Left colon (tissue), 2 donors: ENCODE measurements at regions of chr9 and their contacts with region 1.

Region 1: GRCh38 chr9:108272349-108272899 is 583.4 kb downstream of the ACTL7B start:
- DNase-seq: peak; percentile 56 to 69
- ATAC-seq: peak; percentile 75

Region 2: DNA sequence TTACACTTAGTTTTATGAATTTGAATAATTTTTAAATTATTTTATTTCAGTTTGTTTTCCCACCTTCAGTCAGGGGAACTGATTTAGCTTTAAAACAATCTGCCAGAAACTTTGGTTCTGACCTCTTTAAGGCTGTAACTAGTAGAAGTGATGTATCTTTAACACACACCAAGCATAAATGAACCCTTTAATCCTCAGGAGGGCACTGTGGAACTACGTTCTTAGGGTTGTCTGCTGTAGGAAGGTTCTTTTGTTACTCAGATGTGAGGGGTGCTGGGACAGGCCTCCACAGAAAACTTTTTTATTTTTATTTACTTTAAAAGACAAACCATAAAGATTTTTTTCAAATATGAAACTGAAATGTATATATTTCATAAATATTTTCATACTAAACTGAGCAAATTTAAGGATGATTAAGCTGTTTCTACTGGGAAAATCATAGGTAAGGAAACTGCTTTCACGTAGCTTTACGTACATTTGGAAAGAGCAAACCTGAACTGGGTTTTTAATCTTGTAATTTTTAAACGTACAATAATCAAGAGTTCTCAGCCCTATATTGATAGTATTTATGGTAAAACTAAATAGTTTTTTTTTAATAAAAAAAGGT is 788.2 kb before region 1 on chr9:
- intact Hi-C with region 1: loop called in 1 of 2 experiments (anchors 5 kb)
- DNase-seq: peak in 1 of 2 donors; percentile 40
- ATAC-seq: peak; percentile 18

Region 3: DNA sequence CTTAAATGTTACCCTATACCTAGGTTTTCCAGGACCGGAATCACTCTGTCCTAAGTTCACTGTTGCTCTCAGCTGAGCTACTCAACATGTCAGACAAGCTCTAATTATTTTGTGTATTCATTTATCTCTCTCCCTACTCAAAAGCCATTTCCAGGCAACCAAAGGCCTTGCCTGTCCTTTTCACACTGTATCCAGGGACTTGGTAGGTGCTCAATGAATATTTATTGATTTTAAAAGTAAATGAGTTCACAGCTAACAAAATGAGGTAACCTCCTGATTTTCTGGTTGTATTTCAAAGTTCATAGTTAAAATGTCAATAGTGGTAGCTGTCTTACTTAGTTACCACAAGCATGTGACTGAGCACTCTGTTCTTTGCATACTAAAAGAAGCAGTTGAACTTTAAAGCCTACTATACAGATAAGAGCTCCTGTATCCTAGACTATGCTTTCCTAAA is 61.1 kb after region 1 on chr9:
- intact Hi-C with region 1: no loop called
- DNase-seq: no peak
- ATAC-seq: no peak